ENCODE measurements at regions of chr2 and their contacts with region 1.

Region 1: DNA sequence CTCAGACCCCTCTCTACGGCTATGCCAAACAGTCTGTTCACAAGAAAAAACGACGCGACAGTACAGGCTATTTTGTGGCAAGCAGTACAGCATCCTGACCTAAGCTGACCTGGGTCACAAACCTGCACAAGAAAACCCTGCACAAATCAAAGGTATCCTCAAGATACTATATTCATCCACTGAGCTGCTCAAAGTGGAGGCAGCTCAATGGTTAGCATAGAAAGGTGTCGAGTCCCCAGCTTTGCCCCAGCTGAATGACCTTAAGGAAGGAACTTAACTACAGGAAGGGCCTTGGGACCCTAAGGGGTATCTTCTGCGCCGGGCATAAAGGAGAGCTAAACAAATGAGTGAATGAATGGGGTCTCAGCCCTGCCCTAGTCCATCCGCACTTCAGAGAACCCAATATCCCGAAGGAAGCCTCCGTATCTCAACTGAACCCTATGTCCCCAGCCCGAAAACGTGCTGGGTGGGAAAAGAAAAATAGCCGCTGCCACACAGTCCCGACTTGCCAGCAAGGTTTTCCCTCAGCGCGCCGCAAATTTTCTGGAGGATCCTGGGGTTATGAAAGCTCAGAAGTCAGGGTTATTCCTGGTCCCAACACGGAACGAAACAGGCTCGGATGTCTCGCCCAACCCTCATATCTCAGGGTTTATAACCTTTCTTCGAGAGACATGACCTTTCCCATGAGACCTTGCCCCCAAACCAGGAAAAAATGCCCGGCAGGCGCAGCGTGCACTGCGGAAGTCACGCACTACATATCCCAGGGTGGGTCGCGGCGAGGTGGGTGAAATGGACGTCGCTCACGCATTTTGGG is at the start of gene FASTKD1:
- DNase-seq: peak; percentile 82
- H3K4me3 Mint-ChIP-seq: peak within 1 kb of the TSS; percentile 99
- H3K27ac Mint-ChIP-seq: peak within 1 kb of the TSS; percentile 90
- H3K4me1 Mint-ChIP-seq: peaks cover 32% of the 10 kb centered on the region
- H3K27me3 Mint-ChIP-seq: no peaks in the 10 kb centered on the region
- total RNA-seq, gene FASTKD1: 50.3 and 50.4 TPM in 2 replicates

Region 2: DNA sequence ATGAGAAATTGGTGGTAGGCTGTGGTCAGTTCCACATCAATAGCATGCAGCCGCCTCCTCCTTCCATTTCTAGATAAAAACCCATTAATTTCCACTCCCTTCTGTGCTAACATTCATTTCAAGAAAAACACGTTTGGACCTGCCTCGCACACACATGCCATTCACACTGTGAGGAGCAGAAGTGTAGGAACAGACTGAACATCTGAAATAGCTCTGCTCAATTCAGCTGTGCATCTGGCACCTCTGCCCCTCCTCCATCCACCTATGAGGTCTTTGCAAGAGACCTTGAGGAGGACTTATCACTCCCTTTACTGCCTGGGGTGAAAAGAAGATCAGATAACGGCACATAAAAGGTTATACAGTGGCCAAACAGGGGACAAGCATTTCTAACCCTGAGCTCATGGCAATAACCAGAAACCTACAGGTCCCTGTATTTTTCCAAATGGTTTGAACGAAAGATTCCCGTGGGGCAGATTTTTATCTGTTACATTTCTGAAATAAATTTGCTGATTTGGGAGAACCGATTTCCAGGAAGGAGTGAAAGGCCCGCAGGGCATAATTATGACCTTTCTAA is 180.2 kb before region 1 on chr2:
- intact Hi-C with region 1: no loop called
- DNase-seq: no peak
- H3K4me3 Mint-ChIP-seq: no peak overlapping the region
- H3K27ac Mint-ChIP-seq: no peak overlapping the region
- H3K4me1 Mint-ChIP-seq: no peaks in the 10 kb centered on the region
- H3K27me3 Mint-ChIP-seq: peaks cover 19% of the 10 kb centered on the region

Region 3: DNA sequence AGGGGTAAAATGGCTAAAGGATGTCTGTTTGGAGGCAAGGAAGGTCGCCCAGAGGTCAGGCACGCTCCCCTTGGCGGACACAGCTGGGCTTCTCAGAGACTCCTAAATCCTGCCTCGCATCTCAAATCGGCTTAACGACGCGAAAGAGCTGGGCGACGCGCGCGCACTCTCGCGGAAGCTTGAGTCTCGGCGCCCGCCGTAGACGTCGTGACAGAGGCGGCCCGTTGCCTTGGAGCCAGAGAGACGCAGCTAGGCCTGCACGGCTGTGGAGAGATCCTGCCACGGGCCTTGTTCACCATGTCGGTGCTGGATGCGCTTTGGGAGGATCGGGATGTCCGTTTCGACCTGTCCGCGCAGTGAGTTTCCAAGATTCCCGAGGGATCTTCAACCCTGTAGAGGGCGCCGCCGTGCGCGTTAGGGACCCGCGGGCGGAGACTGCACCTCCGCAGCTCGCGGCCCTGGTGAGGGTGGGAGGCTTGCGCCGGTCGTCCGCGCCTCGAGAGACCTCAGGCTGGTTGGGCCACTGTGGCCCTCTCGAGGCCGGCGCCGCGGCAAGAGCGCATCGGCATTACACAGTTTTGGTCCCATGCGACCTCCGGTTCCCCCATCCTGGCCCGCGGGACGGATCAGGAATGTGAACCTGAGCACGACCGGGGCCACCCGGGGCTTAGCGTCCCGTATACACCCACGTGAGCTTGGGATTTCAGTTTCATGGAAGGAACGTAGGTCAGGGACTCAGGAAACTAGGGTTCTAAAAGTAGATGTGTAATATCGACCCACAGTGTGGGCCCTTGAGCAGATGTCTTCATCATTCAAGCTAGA is 93.9 kb before region 1 on chr2 and contains the start of gene BBS5:
- intact Hi-C with region 1: loop called (anchors 5 kb)
- DNase-seq: peak; percentile 62
- H3K4me3 Mint-ChIP-seq: peak within 1 kb of the TSS; percentile 88
- H3K27ac Mint-ChIP-seq: peak within 1 kb of the TSS; percentile 41
- H3K4me1 Mint-ChIP-seq: peaks cover 14% of the 10 kb centered on the region
- H3K27me3 Mint-ChIP-seq: peaks cover 2% of the 10 kb centered on the region
- total RNA-seq, gene BBS5: 3.3 and 3.6 TPM in 2 replicates

Region 4: GRCh38 chr2:169562519-169562918 is 10.8 kb before region 1 on chr2:
- intact Hi-C with region 1: loop called (anchors 1 kb)
- DNase-seq: no peak
- H3K4me3 Mint-ChIP-seq: no peak overlapping the region
- H3K27ac Mint-ChIP-seq: no peak overlapping the region
- H3K4me1 Mint-ChIP-seq: no peaks in the 10 kb centered on the region
- H3K27me3 Mint-ChIP-seq: no peaks in the 10 kb centered on the region

Region 5: DNA sequence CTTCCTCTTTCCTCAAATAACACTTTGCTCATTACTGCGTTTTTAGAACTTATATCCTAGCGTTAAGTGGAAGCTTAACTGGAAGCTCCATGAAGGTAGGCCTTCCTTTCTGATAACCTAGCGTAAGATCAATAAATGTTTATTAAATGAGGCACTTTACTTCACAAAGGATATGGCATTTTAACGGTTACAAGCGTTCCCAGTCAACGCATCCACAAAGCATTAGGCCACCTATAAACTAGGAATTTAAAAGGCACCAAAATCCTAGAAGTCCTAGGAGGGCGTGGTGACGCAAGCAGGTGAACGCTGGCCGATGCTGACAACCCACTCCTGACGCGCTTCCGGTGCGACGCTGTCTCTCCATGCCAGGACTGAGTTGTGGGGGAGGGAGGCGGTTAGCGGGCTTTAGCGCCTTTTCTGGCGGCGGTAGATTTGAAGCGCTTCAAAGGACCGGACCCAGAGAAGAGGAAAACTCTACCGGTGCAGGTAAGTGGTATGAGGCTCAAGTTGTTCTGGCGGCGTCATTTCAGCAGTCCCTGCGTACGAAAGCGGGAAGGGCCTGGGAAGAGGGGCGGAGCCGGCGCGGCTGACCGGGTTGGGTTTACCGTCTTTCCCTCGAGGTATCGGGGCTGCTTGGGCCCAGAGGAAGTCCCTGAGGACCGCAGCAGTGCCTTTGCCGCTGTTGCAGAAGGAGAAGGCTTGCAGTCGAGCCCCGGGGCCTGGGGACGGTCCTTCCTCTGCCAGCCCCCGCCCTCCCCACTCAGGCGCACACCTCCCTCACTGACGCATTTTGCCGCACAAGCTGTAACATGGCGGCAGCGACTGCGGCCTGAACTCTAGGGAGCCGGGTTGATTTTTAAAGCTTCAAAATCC is 10.9 kb after region 1 on chr2 and contains the start of gene PPIG:
- intact Hi-C with region 1: loop called (anchors 1 kb)
- DNase-seq: peak; percentile 78
- H3K4me3 Mint-ChIP-seq: peak within 1 kb of the TSS; percentile 100
- H3K27ac Mint-ChIP-seq: peak within 1 kb of the TSS; percentile 100
- H3K4me1 Mint-ChIP-seq: peaks cover 21% of the 10 kb centered on the region
- H3K27me3 Mint-ChIP-seq: peaks cover 2% of the 10 kb centered on the region
- total RNA-seq, gene PPIG: 54.2 and 56.3 TPM in 2 replicates